ENCODE measurements at regions of chr3 and their contacts with region 1.

Region 1: GRCh38 chr3:66038726-66039589 is at the start of gene MAGI1:
- DNase-seq: peak; percentile 94
- H3K4me3 Mint-ChIP-seq: peak within 1 kb of the TSS; percentile 72
- H3K27ac Mint-ChIP-seq: peak within 1 kb of the TSS; percentile 42
- H3K4me1 Mint-ChIP-seq: peaks cover 28% of the 10 kb centered on the region
- H3K27me3 Mint-ChIP-seq: no peaks in the 10 kb centered on the region
- CTCF ChIP-seq: no peak
- total RNA-seq, gene MAGI1: 75.1 and 76.4 TPM in 2 replicates

Region 2: DNA sequence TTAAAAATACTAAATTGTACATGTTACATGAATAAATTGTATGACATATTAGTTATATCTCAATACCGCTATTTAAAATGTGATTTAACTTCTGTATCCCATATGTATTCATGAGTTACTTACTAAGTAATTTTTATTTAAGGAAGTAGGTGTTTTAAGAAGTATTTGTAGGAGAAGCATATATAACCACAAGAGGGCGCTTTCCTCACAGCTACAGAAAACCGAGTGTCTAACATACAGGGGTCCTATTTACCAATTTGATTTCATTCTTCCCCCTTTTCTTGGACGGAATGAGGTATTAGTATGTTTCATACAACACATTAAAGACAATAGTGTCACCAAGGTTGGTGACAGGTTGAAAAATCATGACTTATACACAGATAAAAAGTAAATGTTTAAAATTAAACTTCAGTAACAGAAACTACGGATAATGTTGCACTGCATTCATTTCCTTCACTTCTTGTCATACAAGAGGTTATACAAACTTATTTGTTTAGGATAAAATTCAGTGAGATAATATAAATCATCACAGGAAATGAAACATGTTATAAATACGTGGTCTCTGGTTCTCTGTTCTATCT is 253.8 kb before region 1 on chr3:
- CTCF ChIA-PET with region 1: no interaction called
- intact Hi-C with region 1: loop called (anchors 10 kb)
- DNase-seq: peak; percentile 17
- H3K4me3 Mint-ChIP-seq: no peak overlapping the region
- H3K27ac Mint-ChIP-seq: no peak overlapping the region
- H3K4me1 Mint-ChIP-seq: peaks cover 24% of the 10 kb centered on the region
- H3K27me3 Mint-ChIP-seq: no peaks in the 10 kb centered on the region
- CTCF ChIP-seq: peak; percentile 43

Region 3: GRCh38 chr3:65795166-65795565 is 243.8 kb before region 1 on chr3:
- CTCF ChIA-PET with region 1: no interaction called
- intact Hi-C with region 1: no loop called
- DNase-seq: no peak
- H3K4me3 Mint-ChIP-seq: no peak overlapping the region
- H3K27ac Mint-ChIP-seq: no peak overlapping the region
- H3K4me1 Mint-ChIP-seq: peaks cover 10% of the 10 kb centered on the region
- H3K27me3 Mint-ChIP-seq: no peaks in the 10 kb centered on the region
- CTCF ChIP-seq: no peak

Region 4: DNA sequence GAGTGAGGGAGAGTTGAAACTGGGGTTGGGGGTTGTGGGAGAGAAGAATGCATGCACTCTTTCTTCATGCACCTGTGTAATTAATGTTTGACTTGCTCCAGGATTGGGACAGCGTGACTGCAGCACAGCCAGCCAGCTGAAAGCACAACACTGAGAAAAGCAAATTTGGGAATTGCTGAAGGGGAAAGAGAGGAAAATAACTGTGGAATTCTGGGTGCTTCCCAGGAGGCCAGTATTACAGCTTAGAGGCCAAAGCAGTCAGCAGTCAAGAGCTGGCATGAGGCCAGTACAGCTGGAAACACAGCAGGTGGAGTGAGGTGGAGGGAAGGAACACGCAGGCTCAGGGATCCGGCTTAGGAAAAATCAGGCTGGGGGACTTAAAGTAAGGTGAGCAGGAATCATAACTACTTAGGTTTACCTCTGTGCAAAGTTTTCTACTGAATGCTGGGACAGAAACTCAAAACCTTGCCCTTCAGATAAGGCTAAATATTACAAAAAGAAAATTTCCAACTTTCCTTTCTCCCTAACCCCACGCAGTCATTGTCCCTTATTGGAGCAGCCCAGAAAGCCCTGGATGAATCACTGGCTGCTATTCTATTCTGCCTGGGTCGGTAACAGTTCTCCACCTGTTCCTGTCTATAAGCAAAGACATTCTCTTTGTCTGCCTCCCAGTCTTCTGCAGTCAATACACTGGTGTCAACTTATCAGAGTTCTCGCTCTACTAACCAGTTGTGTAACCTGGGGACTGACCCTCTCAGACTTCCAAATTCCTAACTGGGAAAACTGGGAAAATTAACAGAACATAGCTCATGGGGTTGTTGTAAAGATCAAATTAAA is 167.4 kb before region 1 on chr3:
- CTCF ChIA-PET with region 1: no interaction called
- intact Hi-C with region 1: no loop called
- DNase-seq: peak; percentile 50
- H3K4me3 Mint-ChIP-seq: peak overlapping the region; percentile 13
- H3K27ac Mint-ChIP-seq: peak overlapping the region; percentile 6
- H3K4me1 Mint-ChIP-seq: peaks cover 50% of the 10 kb centered on the region
- H3K27me3 Mint-ChIP-seq: no peaks in the 10 kb centered on the region
- CTCF ChIP-seq: no peak

Region 5: GRCh38 chr3:65927549-65927948 is 111.4 kb before region 1 on chr3:
- CTCF ChIA-PET with region 1: no interaction called
- intact Hi-C with region 1: loop called (anchors 10 kb)
- DNase-seq: peak; percentile 69
- H3K4me3 Mint-ChIP-seq: peak overlapping the region; percentile 65
- H3K27ac Mint-ChIP-seq: peak overlapping the region; percentile 93
- H3K4me1 Mint-ChIP-seq: peaks cover 61% of the 10 kb centered on the region
- H3K27me3 Mint-ChIP-seq: no peaks in the 10 kb centered on the region
- CTCF ChIP-seq: no peak

Region 6: GRCh38 chr3:65996589-65996988 is 42.4 kb before region 1 on chr3:
- CTCF ChIA-PET with region 1: no interaction called
- intact Hi-C with region 1: loop called (anchors 5 kb)
- DNase-seq: peak; percentile 68
- H3K4me3 Mint-ChIP-seq: peak overlapping the region; percentile 65
- H3K27ac Mint-ChIP-seq: peak overlapping the region; percentile 92
- H3K4me1 Mint-ChIP-seq: peaks cover 69% of the 10 kb centered on the region
- H3K27me3 Mint-ChIP-seq: no peaks in the 10 kb centered on the region
- CTCF ChIP-seq: no peak

Region 7: GRCh38 chr3:66115858-66116654 is 77.1 kb after region 1 on chr3:
- CTCF ChIA-PET with region 1: no interaction called
- intact Hi-C with region 1: loop called (anchors 5 kb)
- DNase-seq: peak; percentile 79
- H3K4me3 Mint-ChIP-seq: no peak overlapping the region
- H3K27ac Mint-ChIP-seq: peak overlapping the region; percentile 88
- H3K4me1 Mint-ChIP-seq: peaks cover 27% of the 10 kb centered on the region
- H3K27me3 Mint-ChIP-seq: no peaks in the 10 kb centered on the region
- CTCF ChIP-seq: no peak

Region 8: GRCh38 chr3:66138336-66139313 is 99.7 kb after region 1 on chr3:
- CTCF ChIA-PET with region 1: interaction called, 5 read pairs
- intact Hi-C with region 1: loop called (anchors 2 kb)
- DNase-seq: peak; percentile 64
- H3K4me3 Mint-ChIP-seq: no peak overlapping the region
- H3K27ac Mint-ChIP-seq: no peak overlapping the region
- H3K4me1 Mint-ChIP-seq: peaks cover 40% of the 10 kb centered on the region
- H3K27me3 Mint-ChIP-seq: no peaks in the 10 kb centered on the region
- CTCF ChIP-seq: peak; percentile 54

Region 9: GRCh38 chr3:66195347-66195783 is 156.4 kb after region 1 on chr3:
- CTCF ChIA-PET with region 1: interaction called, 3 read pairs
- intact Hi-C with region 1: loop called (anchors 2 kb)
- DNase-seq: peak; percentile 77
- H3K4me3 Mint-ChIP-seq: peak overlapping the region; percentile 66
- H3K27ac Mint-ChIP-seq: no peak overlapping the region
- H3K4me1 Mint-ChIP-seq: no peaks in the 10 kb centered on the region
- H3K27me3 Mint-ChIP-seq: no peaks in the 10 kb centered on the region
- CTCF ChIP-seq: no peak

Measured in Calu3 (cell line).